Transverse colon (tissue), 4 donors: ENCODE measurements at regions of chr5 and their contacts with region 1.

Region 1: DNA sequence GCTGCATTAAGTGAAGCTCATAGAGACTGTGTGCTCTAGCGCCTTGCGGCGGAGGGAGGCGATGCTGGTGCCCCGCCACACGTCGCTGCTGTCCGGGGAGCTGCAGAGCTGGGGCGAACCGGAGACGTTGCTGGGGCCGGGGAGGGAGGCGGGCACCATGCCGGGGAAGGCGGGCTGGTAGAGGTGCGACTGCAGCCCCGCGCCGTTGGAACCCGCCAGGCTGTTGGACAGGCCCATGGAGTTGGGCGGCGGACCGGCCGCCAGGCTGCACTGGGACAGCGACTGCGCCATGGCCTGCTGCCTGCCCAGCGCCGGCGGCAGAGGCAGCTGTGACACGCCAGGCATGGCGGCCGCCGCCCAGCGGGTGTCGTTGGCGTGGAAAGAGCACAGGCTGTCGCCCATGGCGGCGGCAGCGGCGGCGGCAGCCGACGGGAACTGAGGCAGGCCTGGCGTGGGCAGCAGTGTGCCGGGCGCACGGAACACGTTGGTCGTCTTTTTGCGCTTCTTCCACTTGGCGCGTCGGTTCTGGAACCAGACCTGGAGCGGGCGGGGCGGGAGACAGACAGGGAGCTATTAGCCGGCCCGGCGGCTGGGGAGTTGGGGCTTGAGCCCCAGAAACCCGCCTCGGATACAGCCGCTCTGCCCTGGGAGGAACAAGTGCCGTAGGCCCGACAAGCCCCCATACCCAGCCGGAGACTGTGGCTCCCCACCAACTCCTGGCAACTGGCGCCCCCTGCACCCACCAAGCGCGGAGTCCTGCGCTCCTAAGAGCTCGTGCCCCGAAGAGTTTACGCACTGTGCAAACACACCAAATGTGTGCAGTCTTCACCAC is 8.0 kb downstream of the OTP start:
- DNase-seq: peak; percentile 64
- H3K4me3 ChIP-seq: peak overlapping the region; percentile 13 to 59 (median 30)
- H3K27ac ChIP-seq: no peak overlapping the region
- H3K4me1 ChIP-seq: peaks cover 7 to 29% (median 20%) of the 10 kb centered on the region in 4 donors
- H3K27me3 ChIP-seq: peaks cover 100% of the 10 kb centered on the region
- CTCF ChIP-seq: peak in 4 of 5 experiments; percentile 7 to 28 (median 16)
- EP300 ChIP-seq: no peak
- POLR2A ChIP-seq: no peak

Region 2: GRCh38 chr5:77560677-77561263 is 69.7 kb before region 1 on chr5:
- in situ Hi-C with region 1: no loop called
- intact Hi-C with region 1: loop called (anchors 2 kb)
- DNase-seq: no peak
- H3K4me3 ChIP-seq: no peak overlapping the region
- H3K27ac ChIP-seq: no peak overlapping the region
- H3K4me1 ChIP-seq: no peaks in the 10 kb centered on the region
- H3K27me3 ChIP-seq: peaks cover 8% of the 10 kb centered on the region
- CTCF ChIP-seq: peak; percentile 30 to 48 (median 39)
- EP300 ChIP-seq: no peak
- POLR2A ChIP-seq: no peak

Region 3: GRCh38 chr5:78008356-78008967 is 378.0 kb after region 1 on chr5:
- in situ Hi-C with region 1: loop called in 1 of 4 experiments (anchors 25 kb)
- intact Hi-C with region 1: no loop called
- DNase-seq: no peak
- H3K4me3 ChIP-seq: no peak overlapping the region
- H3K27ac ChIP-seq: no peak overlapping the region
- H3K4me1 ChIP-seq: no peaks in the 10 kb centered on the region
- H3K27me3 ChIP-seq: no peaks in the 10 kb centered on the region
- CTCF ChIP-seq: peak; percentile 66 to 70 (median 69)
- EP300 ChIP-seq: no peak
- POLR2A ChIP-seq: no peak